ENCODE measurements at regions of chr5 and their contacts with region 1.

Region 1: DNA sequence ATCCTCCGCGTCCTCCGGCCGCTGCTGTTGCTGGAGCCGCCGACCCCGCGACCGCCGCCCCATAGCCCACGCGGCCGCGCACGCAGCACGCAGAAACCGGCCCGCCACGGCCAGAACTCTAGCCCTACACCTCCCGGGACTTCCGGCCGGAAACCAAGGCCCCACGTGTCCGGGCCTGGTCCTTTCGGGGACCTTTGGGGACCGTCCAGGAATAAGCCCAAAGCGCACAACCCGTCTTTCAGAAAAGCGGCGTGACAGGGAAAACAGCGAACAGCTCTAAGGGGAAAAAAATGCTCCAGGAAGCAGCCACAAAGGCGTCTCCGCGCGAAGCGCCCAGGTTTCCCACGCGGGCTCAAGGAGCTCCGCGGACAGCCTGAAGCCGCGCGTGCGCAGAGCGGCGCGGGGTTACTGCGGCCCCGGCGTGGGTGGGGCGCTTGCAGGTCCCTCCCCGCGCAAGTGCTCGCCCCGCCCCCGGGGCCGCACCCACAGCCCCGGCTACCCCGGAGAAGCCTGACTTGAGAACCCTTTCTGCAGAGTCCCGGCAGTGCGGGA is at the starts of genes NSUN2 and SRD5A1:
- DNase-seq: peak; percentile 94
- H3K4me3 ChIP-seq: peak within 1 kb of the TSS; percentile 97
- H3K27ac ChIP-seq: peak within 1 kb of the TSS; percentile 43
- H3K4me1 ChIP-seq: peaks cover 19% of the 10 kb centered on the region
- CTCF ChIP-seq: no peak
- total RNA-seq, gene NSUN2: 88.1 and 88.9 TPM in 2 replicates
- total RNA-seq, gene SRD5A1: 16.7 and 31.6 TPM in 2 replicates

Region 2: GRCh38 chr5:5752844-5753243 is 880.1 kb before region 1 on chr5:
- CTCF ChIA-PET with region 1: no interaction called
- POLR2A ChIA-PET with region 1: no interaction called
- intact Hi-C with region 1: loop called (anchors 10 kb)
- DNase-seq: peak; percentile 68
- H3K4me3 ChIP-seq: peak overlapping the region; percentile 39
- H3K27ac ChIP-seq: peak overlapping the region; percentile 75
- H3K4me1 ChIP-seq: peaks cover 79% of the 10 kb centered on the region
- CTCF ChIP-seq: no peak

Region 3: GRCh38 chr5:6652025-6652424 is 19.0 kb after region 1 on chr5:
- CTCF ChIA-PET with region 1: no interaction called
- POLR2A ChIA-PET with region 1: interaction called, 20 read pairs
- intact Hi-C with region 1: loop called (anchors 1 kb)
- DNase-seq: peak; percentile 94
- H3K4me3 ChIP-seq: peak overlapping the region; percentile 55
- H3K27ac ChIP-seq: peak overlapping the region; percentile 61
- H3K4me1 ChIP-seq: peaks cover 47% of the 10 kb centered on the region
- CTCF ChIP-seq: no peak

Region 4: GRCh38 chr5:6712577-6713275 is 79.7 kb after region 1 on chr5:
- CTCF ChIA-PET with region 1: no interaction called
- POLR2A ChIA-PET with region 1: interaction called, 9 read pairs
- intact Hi-C with region 1: loop called (anchors 1 kb)
- DNase-seq: peak; percentile 96
- H3K4me3 ChIP-seq: peak overlapping the region; percentile 71
- H3K27ac ChIP-seq: peak overlapping the region; percentile 70
- H3K4me1 ChIP-seq: peaks cover 50% of the 10 kb centered on the region
- CTCF ChIP-seq: 0 out of 2 replicates have a peak, but pooled peaks have one; percentile 2

Region 5: DNA sequence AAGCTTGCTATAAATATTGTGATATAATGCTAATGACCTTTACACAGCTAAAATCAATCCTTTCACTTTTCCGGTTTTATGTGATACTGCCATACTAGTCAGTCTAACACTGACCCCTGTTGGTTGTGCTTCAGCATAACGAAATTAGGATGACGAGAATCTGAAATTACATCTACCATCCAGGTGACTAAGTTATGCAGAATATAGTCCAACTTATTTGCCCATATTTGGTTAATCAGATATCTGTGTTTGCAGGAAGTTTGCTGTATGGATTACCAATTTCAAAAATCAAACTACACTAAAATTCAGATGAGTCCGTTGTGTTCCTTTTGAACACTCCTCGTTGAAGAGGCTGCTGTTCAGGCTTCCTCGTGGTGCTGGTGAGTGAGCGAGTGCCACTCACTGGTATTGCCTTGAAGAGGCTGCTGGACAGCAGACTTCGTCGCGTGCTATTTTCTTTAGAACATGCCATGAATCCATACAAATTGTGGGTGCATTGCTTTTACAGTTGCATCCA is 112.8 kb after region 1 on chr5:
- CTCF ChIA-PET with region 1: no interaction called
- POLR2A ChIA-PET with region 1: no interaction called
- intact Hi-C with region 1: loop called (anchors 1 kb)
- DNase-seq: peak; percentile 69
- H3K4me3 ChIP-seq: no peak overlapping the region
- H3K27ac ChIP-seq: no peak overlapping the region
- H3K4me1 ChIP-seq: peaks cover 11% of the 10 kb centered on the region
- CTCF ChIP-seq: peak; percentile 95

Measured in OCI-LY7 (cell line).